ENCODE measurements at regions of chr17 and their contacts with region 1.

Region 1: GRCh38 chr17:43755389-43755875 is 3.2 kb downstream of the SOST start:
- DNase-seq: no peak
- H3K4me3 ChIP-seq: peak overlapping the region in 2 of 3 donors; percentile 27 to 55
- H3K27ac ChIP-seq: no peak overlapping the region
- H3K4me1 ChIP-seq: no peaks in the 10 kb centered on the region
- H3K27me3 ChIP-seq: peaks cover 0 to 42% of the 10 kb centered on the region in 2 donors
- CTCF ChIP-seq: no peak
- POLR2A ChIP-seq: no peak

Region 2: GRCh38 chr17:43562679-43563599 is 192.5 kb before region 1 on chr17:
- intact Hi-C with region 1: loop called (anchors 10 kb)
- DNase-seq: no peak
- H3K4me3 ChIP-seq: no peak overlapping the region
- H3K27ac ChIP-seq: peak overlapping the region in 1 of 2 donors; percentile 19
- H3K4me1 ChIP-seq: no peaks in the 10 kb centered on the region
- H3K27me3 ChIP-seq: no peaks in the 10 kb centered on the region
- CTCF ChIP-seq: no peak
- POLR2A ChIP-seq: no peak

Region 3: GRCh38 chr17:43694077-43694870 is 61.2 kb before region 1 on chr17:
- intact Hi-C with region 1: loop called (anchors 5 kb)
- DNase-seq: peak; percentile 69 to 70
- H3K4me3 ChIP-seq: no peak overlapping the region
- H3K27ac ChIP-seq: no peak overlapping the region
- H3K4me1 ChIP-seq: no peaks in the 10 kb centered on the region
- H3K27me3 ChIP-seq: no peaks in the 10 kb centered on the region
- CTCF ChIP-seq: peak; percentile 85 to 97 (median 93)
- POLR2A ChIP-seq: no peak

Region 4: GRCh38 chr17:44837243-44837642 is 1081.8 kb after region 1 on chr17:
- intact Hi-C with region 1: loop called (anchors 5 kb)
- DNase-seq: no peak
- H3K4me3 ChIP-seq: no peak overlapping the region
- H3K27ac ChIP-seq: no peak overlapping the region
- H3K4me1 ChIP-seq: no peaks in the 10 kb centered on the region
- H3K27me3 ChIP-seq: no peaks in the 10 kb centered on the region
- CTCF ChIP-seq: no peak
- POLR2A ChIP-seq: no peak

Measured in breast epithelium (tissue), 4 donors.